ENCODE measurements at regions of chr14 and their contacts with region 1.

Region 1: GRCh38 chr14:89416002-89416995 is 734 bp downstream of the FOXN3 start:
- DNase-seq: peak; percentile 98
- H3K4me3 Mint-ChIP-seq: peak overlapping the region; percentile 88
- H3K27ac Mint-ChIP-seq: peak overlapping the region; percentile 84
- H3K4me1 Mint-ChIP-seq: peaks cover 48% of the 10 kb centered on the region
- H3K27me3 Mint-ChIP-seq: no peaks in the 10 kb centered on the region

Region 2: DNA sequence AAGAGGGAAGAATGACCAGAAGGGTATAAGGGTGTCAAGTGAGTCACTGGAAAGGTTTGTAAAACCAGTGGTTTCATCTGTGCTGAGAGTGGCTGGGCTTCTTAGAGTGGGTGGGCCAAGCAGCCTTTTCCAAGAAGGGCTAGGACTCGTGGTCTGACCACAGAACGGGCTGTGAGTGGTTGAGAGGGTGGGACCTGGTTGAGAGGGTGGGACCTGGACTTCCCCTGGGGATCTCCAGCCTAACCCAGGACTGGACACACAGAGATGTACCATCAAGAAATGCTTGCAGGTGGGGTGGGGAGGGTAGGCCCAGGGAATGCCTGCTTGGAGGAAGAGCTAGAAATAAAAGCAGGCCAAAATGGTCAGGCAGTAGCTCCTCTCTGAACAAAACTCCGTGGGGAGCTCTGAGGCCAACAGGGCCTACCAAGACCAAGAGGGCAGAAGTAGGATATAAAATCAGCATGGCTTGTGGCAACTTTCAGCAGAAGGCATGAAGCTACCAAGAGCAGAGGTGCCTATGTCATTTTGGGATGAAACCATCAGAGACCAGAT is 139.8 kb before region 1 on chr14:
- intact Hi-C with region 1: loop called (anchors 1 kb)
- DNase-seq: peak; percentile 78
- H3K4me3 Mint-ChIP-seq: peak overlapping the region; percentile 70
- H3K27ac Mint-ChIP-seq: peak overlapping the region; percentile 98
- H3K4me1 Mint-ChIP-seq: peaks cover 79% of the 10 kb centered on the region
- H3K27me3 Mint-ChIP-seq: no peaks in the 10 kb centered on the region

Region 3: DNA sequence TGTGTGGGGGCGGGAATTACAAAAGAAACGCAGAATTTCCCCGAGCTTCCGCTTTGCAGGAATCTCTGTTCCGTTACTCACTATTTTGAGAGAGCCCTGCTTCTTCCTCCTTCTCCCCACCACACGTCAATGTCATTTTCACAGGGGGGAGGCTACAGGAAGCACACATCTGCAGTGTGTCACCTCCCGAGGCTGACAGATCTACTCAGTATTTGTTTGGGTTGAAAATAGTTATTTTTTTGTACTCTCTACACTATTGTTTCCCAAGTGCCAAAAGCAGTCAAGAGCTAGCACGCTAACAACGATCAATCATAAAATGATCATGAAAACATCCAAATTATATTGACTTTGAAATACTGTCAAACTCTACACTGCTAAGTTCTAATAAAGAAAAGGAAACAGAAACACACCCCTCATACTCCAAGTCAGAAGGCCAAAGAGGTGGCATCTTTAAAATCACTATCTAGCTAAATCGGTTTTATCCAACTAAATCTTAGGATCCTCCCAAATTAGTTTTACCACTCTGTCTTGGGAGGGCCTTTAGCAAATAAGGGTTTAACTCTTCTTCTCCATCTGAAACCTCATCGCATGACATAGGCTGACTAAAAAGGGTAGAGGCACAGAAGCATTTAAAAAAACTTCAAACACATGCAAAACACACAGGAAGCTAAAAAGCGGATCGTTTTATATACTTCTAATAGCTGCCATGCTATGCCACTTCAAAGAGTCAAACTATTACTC is 51.1 kb before region 1 on chr14:
- intact Hi-C with region 1: loop called (anchors 1 kb)
- DNase-seq: peak; percentile 40
- H3K4me3 Mint-ChIP-seq: peak overlapping the region; percentile 73
- H3K27ac Mint-ChIP-seq: peak overlapping the region; percentile 89
- H3K4me1 Mint-ChIP-seq: peaks cover 38% of the 10 kb centered on the region
- H3K27me3 Mint-ChIP-seq: no peaks in the 10 kb centered on the region

Region 4: GRCh38 chr14:89509891-89510290 is 93.6 kb after region 1 on chr14:
- intact Hi-C with region 1: loop called (anchors 2 kb)
- DNase-seq: no peak
- H3K4me3 Mint-ChIP-seq: peak overlapping the region; percentile 76
- H3K27ac Mint-ChIP-seq: peak overlapping the region; percentile 93
- H3K4me1 Mint-ChIP-seq: peaks cover 63% of the 10 kb centered on the region
- H3K27me3 Mint-ChIP-seq: no peaks in the 10 kb centered on the region

Region 5: GRCh38 chr14:89701211-89702043 is 285.1 kb after region 1 on chr14:
- intact Hi-C with region 1: loop called (anchors 2 kb)
- DNase-seq: peak; percentile 78
- H3K4me3 Mint-ChIP-seq: peak overlapping the region; percentile 70
- H3K27ac Mint-ChIP-seq: peak overlapping the region; percentile 84
- H3K4me1 Mint-ChIP-seq: peaks cover 51% of the 10 kb centered on the region
- H3K27me3 Mint-ChIP-seq: peaks cover 4% of the 10 kb centered on the region

Region 6: DNA sequence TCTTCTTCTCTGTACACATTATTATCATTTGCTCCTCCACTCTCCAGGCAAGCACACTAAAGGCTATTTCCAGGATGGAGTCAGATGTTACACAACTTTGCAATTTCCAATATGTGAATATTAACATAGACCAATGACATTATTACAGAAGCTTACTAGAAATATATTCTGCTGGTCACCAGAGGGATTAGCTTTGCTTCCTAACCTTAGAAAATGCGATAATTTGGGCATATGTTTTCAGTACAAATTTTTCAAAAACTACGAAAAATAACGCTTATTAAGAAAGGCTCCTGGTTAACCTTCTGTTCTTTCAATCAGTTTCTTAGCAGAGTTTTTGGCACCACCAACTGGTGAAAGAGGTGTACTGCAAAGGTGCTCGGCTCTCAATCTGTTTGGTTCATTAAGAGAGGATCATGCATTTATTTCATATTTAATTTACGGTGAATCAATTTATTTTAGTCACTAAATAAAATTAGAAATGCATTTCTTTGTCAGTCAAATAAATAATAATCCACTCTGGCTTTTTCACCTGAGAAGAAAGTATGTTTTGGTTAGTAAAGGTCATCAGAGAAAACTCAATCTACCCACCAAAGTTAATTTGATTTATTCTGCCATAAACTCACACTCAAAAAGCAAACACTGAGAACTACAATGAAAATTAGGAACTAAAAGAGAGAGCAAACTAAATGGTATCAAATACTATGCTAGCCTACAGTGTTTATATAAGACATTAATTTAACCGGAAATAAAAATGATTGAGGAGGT is 499.0 kb after region 1 on chr14:
- intact Hi-C with region 1: loop called (anchors 5 kb)
- DNase-seq: peak; percentile 38
- H3K4me3 Mint-ChIP-seq: no peak overlapping the region
- H3K27ac Mint-ChIP-seq: no peak overlapping the region
- H3K4me1 Mint-ChIP-seq: peaks cover 4% of the 10 kb centered on the region
- H3K27me3 Mint-ChIP-seq: peaks cover 12% of the 10 kb centered on the region

Measured in activated T-helper 1 cell treated with anti-CD3 and anti-CD28 coated beads, Interleukin-12 subunit alpha, Interleukin-12 subunit beta, Interleukin-2, Interleukin-4 antibody, amounts not matched to agents 30 ng/mL and 10 ng/mL and 1 ng/mL, durations not matched to agents 14 hours and 24 hours and 36 hours (primary cell).